ENCODE measurements at regions of chr1 and their contacts with region 1.

Region 1: DNA sequence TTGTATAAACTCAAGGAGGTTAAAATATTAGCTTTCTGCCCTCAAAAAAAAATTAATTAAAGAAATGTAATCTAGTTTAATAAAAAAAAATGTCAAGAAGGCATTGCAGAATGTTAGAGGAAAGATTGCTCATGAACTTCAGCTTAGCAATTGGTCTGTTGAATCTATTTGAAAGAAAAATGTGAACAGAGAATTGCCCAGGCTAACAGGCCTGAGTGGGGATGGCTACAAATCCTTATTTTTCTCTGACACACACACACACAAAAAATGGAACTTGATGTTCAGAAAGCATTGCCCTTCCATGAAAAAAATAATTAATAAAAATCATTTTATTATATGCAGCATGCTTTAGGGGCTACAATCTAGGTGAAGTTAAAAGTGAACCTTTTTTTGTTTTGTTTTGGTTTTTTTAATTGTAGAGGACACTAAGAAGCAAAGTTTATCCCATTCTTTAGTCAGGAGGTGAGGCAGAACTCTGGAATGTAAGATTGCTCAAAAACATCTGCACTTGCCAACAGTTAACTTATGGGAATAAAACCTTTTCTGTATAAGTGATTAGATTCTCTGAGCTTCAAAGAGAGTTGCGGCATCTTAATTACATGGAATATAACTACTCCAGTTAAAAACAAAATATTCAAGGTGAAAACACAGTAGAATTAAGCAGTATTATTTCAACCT is 658.5 kb upstream of the ADGRL2 start:
- DNase-seq: no peak
- ATAC-seq: no peak
- H3K4me3 ChIP-seq: no peak overlapping the region
- H3K4me3 Mint-ChIP-seq: no peak overlapping the region
- H3K27ac ChIP-seq: no peak overlapping the region
- H3K27ac Mint-ChIP-seq: no peak overlapping the region
- H3K4me1 ChIP-seq: no peaks in the 10 kb centered on the region
- H3K4me1 Mint-ChIP-seq: no peaks in the 10 kb centered on the region
- H3K27me3 ChIP-seq: no peaks in the 10 kb centered on the region
- H3K27me3 Mint-ChIP-seq: no peaks in the 10 kb centered on the region
- CTCF ChIP-seq: no peak

Region 2: GRCh38 chr1:81126989-81127581 is 15.2 kb before region 1 on chr1:
- intact Hi-C with region 1: loop called (anchors 2 kb)
- DNase-seq: no peak
- ATAC-seq: no peak
- H3K4me3 ChIP-seq: no peak overlapping the region
- H3K4me3 Mint-ChIP-seq: no peak overlapping the region
- H3K27ac ChIP-seq: no peak overlapping the region
- H3K27ac Mint-ChIP-seq: no peak overlapping the region
- H3K4me1 ChIP-seq: no peaks in the 10 kb centered on the region
- H3K4me1 Mint-ChIP-seq: no peaks in the 10 kb centered on the region
- H3K27me3 ChIP-seq: no peaks in the 10 kb centered on the region
- H3K27me3 Mint-ChIP-seq: no peaks in the 10 kb centered on the region
- CTCF ChIP-seq: no peak